ENCODE measurements at regions of chr15 and their contacts with region 1.

Region 1: GRCh38 chr15:53203454-53203853 is 413.3 kb upstream of the ONECUT1 start:
- DNase-seq: peak; percentile 59 to 74
- ATAC-seq: peak; percentile 96 to 98
- H3K4me3 ChIP-seq: no peak overlapping the region
- H3K27ac ChIP-seq: peak overlapping the region; percentile 5 to 61 (median 30)
- H3K4me1 ChIP-seq: peaks cover 19 to 23% of the 10 kb centered on the region in 2 donors
- H3K27me3 ChIP-seq: no peaks in the 10 kb centered on the region
- CTCF ChIP-seq: no peak
- POLR2A ChIP-seq: no peak

Region 2: DNA sequence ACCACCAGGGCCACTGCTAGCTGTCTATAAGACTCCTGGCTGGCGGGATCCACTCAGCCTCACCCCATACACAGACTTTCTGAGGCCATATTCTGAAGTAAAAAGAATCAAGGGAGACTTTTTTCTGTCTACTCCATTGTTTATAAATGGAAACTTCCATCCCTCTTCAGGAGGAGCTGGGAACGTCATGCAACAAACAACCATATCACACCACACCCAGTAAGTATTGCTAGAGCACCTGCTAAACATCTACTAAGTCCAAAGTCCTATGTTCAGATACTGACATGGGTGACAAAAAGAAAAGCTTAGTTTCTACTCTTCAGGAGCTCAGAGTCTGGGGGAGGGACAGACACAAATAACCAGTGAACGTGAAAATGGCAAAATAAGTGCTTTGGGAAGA is 88.5 kb before region 1 on chr15:
- in situ Hi-C with region 1: loop called in 1 of 4 experiments (anchors 25 kb)
- intact Hi-C with region 1: no loop called
- DNase-seq: no peak
- ATAC-seq: no peak
- H3K4me3 ChIP-seq: no peak overlapping the region
- H3K27ac ChIP-seq: no peak overlapping the region
- H3K4me1 ChIP-seq: no peaks in the 10 kb centered on the region
- H3K27me3 ChIP-seq: no peaks in the 10 kb centered on the region
- CTCF ChIP-seq: no peak
- POLR2A ChIP-seq: no peak

Measured in gastrocnemius medialis (tissue), 4 donors.